ENCODE measurements at regions of chr5 and their contacts with region 1.

Region 1: DNA sequence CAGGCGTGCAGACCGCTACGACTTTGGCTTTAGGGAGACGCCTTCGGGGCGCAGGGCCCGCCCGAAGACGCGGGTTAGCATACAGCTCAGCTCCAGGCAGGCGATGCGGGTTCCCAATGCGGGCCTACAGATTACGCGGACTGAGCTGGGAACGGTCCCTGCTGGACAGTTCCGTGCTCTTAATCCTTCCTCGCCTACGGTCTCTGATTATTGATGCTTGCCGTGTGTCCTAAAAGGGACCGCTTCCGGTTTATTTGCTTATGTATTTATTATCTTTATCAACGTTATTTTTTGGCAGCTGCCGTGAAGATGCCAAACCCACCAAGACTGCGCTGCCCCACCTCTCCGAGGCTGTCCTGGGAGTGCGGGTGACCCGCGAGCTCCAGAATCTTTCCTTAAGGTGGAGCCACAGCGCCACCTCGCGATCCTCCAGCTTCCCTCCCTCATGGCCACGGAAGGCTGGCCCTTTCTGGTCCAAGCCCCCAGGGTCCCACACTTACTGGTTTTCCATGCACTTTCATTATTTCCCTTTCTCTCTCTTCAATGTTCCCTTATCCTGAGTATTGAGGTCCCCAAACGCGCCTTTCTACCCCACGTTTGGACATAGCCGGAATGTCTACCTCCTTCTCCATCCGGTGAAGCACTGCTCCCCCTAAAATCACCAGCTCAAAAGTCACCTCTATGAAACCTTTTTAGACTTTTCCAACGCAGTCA is 7.0 kb upstream of the EBF1 start:
- DNase-seq: no peak
- ATAC-seq: peak; percentile 83
- H3K4me3 ChIP-seq: peak overlapping the region; percentile 61
- H3K27ac ChIP-seq: no peak overlapping the region
- H3K4me1 ChIP-seq: peaks cover 12% of the 10 kb centered on the region
- H3K27me3 ChIP-seq: no peaks in the 10 kb centered on the region; a peak in 2 of 4 replicates
- CTCF ChIP-seq: peak; percentile 84 to 94 (median 92)
- EP300 ChIP-seq: no peak
- POLR2A ChIP-seq: no peak
- RAD21 ChIP-seq: peak; percentile 95

Region 2: GRCh38 chr5:158074992-158075769 is 1031.5 kb before region 1 on chr5:
- CTCF ChIA-PET with region 1: interaction called, 69 read pairs
- POLR2A ChIA-PET with region 1: interaction called, 4 read pairs
- RAD21 ChIA-PET with region 1: interaction called, 44 read pairs
- SMC1A ChIA-PET with region 1: interaction called, 19 read pairs
- in situ Hi-C with region 1: loop called (anchors 10 kb)
- intact Hi-C with region 1: loop called (anchors 2 kb)
- DNase-seq: no peak
- ATAC-seq: peak; percentile 94
- H3K4me3 ChIP-seq: no peak overlapping the region
- H3K27ac ChIP-seq: no peak overlapping the region
- H3K4me1 ChIP-seq: no peaks in the 10 kb centered on the region
- H3K27me3 ChIP-seq: no peaks in the 10 kb centered on the region; a peak in 1 of 4 replicates
- CTCF ChIP-seq: peak; percentile 78 to 81 (median 80)
- EP300 ChIP-seq: no peak
- POLR2A ChIP-seq: no peak
- RAD21 ChIP-seq: peak; percentile 71

Region 3: DNA sequence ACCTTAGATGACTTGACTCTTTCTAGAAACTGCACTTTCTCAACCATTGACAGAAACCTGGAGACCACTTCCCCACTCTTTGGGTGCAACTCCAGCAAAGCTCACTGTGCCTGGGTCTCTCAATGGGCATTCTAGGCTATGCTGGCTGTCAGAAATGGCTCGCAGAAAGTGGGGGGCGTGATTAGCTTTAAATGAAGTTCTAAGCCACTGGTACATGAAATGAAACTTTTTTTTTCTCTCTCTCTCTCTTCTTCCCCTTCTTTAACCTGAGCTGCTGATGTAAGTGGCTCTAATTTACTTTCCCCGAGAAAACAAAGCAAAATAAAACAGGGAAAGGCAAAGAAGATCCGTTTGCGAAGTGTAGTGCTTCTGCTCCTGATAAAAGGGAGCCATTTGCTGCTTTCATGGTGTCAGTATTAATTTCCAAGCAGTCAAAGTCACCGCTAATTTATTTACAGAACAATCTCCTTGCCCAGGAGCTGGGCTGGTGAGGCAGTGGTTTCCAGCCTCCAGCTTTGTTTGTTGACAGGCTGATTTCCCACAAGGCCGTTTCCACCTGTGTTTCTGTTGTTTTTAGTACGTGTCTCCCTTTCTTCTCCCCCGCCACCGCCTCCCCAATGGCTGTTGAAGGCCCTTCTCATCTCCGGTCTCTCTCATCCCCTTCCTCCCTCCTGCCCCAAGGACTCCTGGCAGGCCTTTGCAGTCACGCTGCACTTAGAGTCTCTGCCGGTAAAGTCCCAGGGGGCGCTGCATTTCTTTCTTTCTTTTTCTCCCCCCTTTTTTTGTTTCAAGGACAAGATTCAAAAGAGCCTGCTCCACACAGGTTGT is 429.9 kb before region 1 on chr5:
- CTCF ChIA-PET with region 1: interaction called, 25 read pairs
- POLR2A ChIA-PET with region 1: no interaction called
- RAD21 ChIA-PET with region 1: interaction called, 14 read pairs
- SMC1A ChIA-PET with region 1: interaction called, 18 read pairs
- in situ Hi-C with region 1: no loop called
- intact Hi-C with region 1: no loop called
- DNase-seq: no peak
- ATAC-seq: peak; percentile 83
- H3K4me3 ChIP-seq: no peak overlapping the region
- H3K27ac ChIP-seq: no peak overlapping the region
- H3K4me1 ChIP-seq: peaks cover 3% of the 10 kb centered on the region; the same call in 1 of the 2 replicates
- H3K27me3 ChIP-seq: no peaks in the 10 kb centered on the region; a peak in 1 of 4 replicates
- CTCF ChIP-seq: peak; percentile 19 to 37 (median 31); a peak in 4 of 6 replicates
- EP300 ChIP-seq: no peak
- POLR2A ChIP-seq: no peak
- RAD21 ChIP-seq: 0 out of 2 replicates have a peak, but pooled peaks have one; percentile 25

Region 4: GRCh38 chr5:158739951-158740757 is 366.6 kb before region 1 on chr5:
- CTCF ChIA-PET with region 1: interaction called, 22 read pairs
- POLR2A ChIA-PET with region 1: no interaction called
- RAD21 ChIA-PET with region 1: interaction called, 5 read pairs
- SMC1A ChIA-PET with region 1: interaction called, 8 read pairs
- in situ Hi-C with region 1: no loop called
- intact Hi-C with region 1: no loop called
- DNase-seq: no peak
- ATAC-seq: no peak
- H3K4me3 ChIP-seq: no peak overlapping the region
- H3K27ac ChIP-seq: no peak overlapping the region
- H3K4me1 ChIP-seq: no peaks in the 10 kb centered on the region
- H3K27me3 ChIP-seq: no peaks in the 10 kb centered on the region
- CTCF ChIP-seq: peak in 1 of 3 experiments; percentile 14; a peak in 2 of 6 replicates
- EP300 ChIP-seq: no peak
- POLR2A ChIP-seq: no peak
- RAD21 ChIP-seq: no peak

Region 5: GRCh38 chr5:158880483-158881001 is 226.2 kb before region 1 on chr5:
- CTCF ChIA-PET with region 1: interaction called, 22 read pairs
- POLR2A ChIA-PET with region 1: interaction called, 7 read pairs
- RAD21 ChIA-PET with region 1: interaction called, 31 read pairs
- SMC1A ChIA-PET with region 1: interaction called, 29 read pairs
- in situ Hi-C with region 1: no loop called
- intact Hi-C with region 1: loop called (anchors 2 kb)
- DNase-seq: no peak
- ATAC-seq: peak; percentile 31
- H3K4me3 ChIP-seq: peak overlapping the region; percentile 24; the same call in 1 of the 2 replicates
- H3K27ac ChIP-seq: peak overlapping the region; percentile 83
- H3K4me1 ChIP-seq: peaks cover 66% of the 10 kb centered on the region
- H3K27me3 ChIP-seq: no peaks in the 10 kb centered on the region
- CTCF ChIP-seq: peak in 2 of 3 experiments; percentile 29 to 53; a peak in 3 of 6 replicates
- EP300 ChIP-seq: peak in 1 of 2 experiments; percentile 2; a peak in 1 of 4 replicates
- POLR2A ChIP-seq: no peak
- RAD21 ChIP-seq: peak; percentile 56

Region 6: GRCh38 chr5:159094745-159095144 is 12.0 kb before region 1 on chr5:
- CTCF ChIA-PET with region 1: interaction called, 10 read pairs
- POLR2A ChIA-PET with region 1: interaction called, 17 read pairs
- RAD21 ChIA-PET with region 1: interaction called, 42 read pairs
- SMC1A ChIA-PET with region 1: interaction called, 51 read pairs
- in situ Hi-C with region 1: no loop called
- intact Hi-C with region 1: no loop called
- DNase-seq: no peak
- ATAC-seq: peak; percentile 35
- H3K4me3 ChIP-seq: peak overlapping the region; percentile 88
- H3K27ac ChIP-seq: peak overlapping the region; percentile 68
- H3K4me1 ChIP-seq: peaks cover 5% of the 10 kb centered on the region; the same call in 1 of the 2 replicates
- H3K27me3 ChIP-seq: no peaks in the 10 kb centered on the region
- CTCF ChIP-seq: no peak
- EP300 ChIP-seq: no peak
- POLR2A ChIP-seq: no peak
- RAD21 ChIP-seq: no peak